Mammary epithelial cell (primary cell): ENCODE measurements at regions of chr1 and their contacts with region 1.

Region 1: DNA sequence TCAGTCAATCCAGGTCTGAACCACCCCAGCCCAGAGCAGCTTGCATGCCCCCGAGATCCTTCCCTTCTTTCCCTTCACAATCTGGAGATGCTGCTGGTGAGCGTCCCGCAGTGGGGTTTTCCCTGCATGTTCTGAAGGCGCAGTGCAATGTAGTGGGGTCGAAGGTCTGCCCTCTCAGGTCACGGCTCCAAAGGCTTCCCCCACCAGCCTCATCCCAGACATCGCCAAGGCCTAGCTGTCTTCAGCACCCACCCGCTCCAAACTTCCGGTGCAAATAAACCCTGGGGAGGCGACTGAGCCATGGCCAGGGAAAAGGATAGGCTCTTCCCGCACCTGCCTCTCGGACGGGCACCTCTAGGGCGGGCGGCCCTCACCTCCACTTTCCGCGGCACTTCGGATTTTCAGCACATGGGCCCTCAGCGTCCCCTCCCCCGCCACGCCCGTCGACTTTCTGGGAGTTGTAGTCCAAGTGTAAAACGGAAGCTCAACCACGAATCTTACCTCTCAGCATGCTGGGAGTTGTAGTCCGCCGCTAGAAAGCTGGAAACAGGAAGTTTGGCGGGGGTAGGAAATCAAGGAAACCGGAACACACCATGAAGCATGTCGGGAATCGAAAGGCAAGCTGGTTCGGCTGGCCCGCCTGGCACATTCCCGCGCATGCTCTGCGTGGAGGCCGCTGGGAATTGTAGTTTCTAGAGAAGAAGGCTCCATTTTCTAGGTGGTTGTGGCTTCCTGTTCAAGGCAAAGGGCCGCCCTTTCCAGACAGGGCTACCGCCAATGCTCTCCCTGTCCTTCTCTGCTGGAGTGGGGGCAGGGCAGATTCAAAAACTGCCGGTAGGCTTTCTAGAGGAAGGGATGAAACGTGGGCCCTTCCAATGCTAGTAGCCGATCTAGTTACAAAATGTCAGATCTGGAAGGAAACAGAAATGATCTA is at the start of gene MRPL24:
- DNase-seq: peak; percentile 100
- H3K4me3 ChIP-seq: peak within 1 kb of the TSS; percentile 50 to 85 (median 73)
- H3K27ac ChIP-seq: peak within 1 kb of the TSS; percentile 37
- H3K4me1 ChIP-seq: peaks cover 13% of the 10 kb centered on the region
- H3K27me3 ChIP-seq: no peaks in the 10 kb centered on the region
- CTCF ChIP-seq: no peak
- total RNA-seq, gene MRPL24: 25.0 to 86.1 TPM

Region 2: GRCh38 chr1:156500797-156501499 is 240.0 kb before region 1 on chr1:
- CTCF ChIA-PET with region 1: no interaction called
- dilution Hi-C with region 1: no loop called
- in situ Hi-C with region 1: no loop called
- intact Hi-C with region 1: loop called (anchors 10 kb)
- DNase-seq: peak; percentile 94
- H3K4me3 ChIP-seq: peak overlapping the region; percentile 75 to 95 (median 84)
- H3K27ac ChIP-seq: peak overlapping the region; percentile 93
- H3K4me1 ChIP-seq: peaks cover 58% of the 10 kb centered on the region
- H3K27me3 ChIP-seq: no peaks in the 10 kb centered on the region
- CTCF ChIP-seq: peak; percentile 28 to 66

Region 3: DNA sequence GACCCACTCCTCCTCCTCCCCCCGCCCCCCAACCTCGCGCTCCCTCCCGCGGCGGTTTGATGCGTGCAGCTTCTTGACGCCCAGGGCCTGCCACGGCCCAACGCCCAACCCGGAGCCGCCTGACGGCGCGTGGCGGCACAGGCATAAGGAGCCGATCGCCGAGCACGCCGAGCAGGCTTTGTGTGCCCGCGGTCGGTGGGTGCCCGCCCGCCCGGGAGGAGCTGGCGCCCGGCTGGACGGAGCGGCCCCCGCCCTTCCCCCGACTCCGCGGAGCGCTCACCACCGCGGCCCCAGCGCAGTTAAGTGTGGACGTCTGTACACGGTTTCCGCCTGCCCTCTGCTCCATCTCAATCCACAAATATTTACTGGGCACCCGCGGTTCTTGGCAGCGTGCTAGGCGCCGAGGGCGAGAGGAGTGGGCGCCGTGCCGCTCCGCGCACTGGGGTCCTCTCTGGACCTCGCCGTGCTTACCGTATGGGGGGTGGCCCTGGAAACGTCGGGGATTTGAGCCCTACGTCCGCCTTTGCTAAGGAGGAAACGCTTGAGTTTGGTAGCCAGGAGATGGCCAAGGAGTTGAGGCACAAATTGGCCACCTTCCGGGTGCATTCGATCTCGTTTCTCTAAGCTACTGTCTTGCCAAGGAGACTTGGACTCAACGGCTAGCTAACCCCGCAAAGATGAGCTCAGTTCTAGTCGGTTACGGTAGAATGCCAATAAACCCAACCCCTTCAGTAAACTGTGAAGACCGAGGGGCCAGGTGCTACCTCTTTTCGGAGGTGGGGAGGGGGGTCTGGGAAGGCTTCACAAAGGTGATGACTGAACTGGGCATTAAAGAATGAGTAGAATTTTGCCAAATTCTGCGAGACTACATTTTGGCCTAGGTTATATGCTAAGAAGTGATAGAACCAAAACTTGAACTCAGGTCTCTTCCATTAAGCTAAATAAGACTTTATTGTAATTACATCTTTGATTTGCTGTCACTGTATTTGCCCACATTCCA is 11.1 kb after region 1 on chr1:
- CTCF ChIA-PET with region 1: no interaction called
- dilution Hi-C with region 1: no loop called
- in situ Hi-C with region 1: no loop called
- intact Hi-C with region 1: loop called (anchors 1 kb)
- DNase-seq: peak; percentile 94
- H3K4me3 ChIP-seq: peak overlapping the region; percentile 68 to 76 (median 72)
- H3K27ac ChIP-seq: peak overlapping the region; percentile 74
- H3K4me1 ChIP-seq: peaks cover 33% of the 10 kb centered on the region
- H3K27me3 ChIP-seq: no peaks in the 10 kb centered on the region
- CTCF ChIP-seq: peak in 1 of 2 donors; percentile 1

Region 4: DNA sequence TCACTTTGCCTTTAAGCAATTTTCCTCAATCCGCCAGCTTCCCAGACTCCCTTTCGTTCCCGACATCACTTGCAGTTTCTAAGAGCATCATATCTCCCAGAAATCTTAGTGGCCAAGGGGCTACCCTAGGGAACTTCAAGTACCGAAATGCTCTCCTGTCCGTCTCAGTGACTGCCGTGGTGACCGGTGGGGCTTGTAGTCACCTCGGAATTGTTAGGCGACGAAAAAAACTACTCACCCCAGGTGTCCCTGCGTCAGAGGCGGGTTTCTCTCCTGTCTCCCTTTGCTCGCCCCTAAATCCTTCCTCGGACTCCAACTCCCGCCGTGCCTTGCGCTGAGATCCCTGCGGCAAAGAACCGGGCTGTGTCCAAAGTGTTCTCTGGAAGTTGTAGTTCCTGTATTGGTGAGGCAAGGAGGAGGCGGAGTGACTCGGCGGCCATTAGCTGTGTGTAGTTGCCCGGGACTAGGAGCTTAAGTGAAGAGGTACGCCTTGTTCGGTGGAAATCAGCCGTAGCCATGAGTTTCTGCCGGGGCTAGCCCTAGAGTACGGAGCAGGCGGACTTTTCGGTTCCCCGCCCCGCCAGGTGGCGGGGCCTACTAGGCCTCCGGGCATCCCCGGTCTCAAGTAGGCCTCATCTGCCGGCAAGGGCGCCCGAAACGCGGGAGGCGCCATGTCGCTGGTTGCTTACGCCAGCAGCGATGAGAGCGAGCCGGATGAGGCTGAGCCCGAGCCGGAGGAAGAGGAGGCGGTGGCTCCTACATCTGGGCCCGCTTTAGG is 26.3 kb after region 1 on chr1 and contains the start of gene PRCC:
- CTCF ChIA-PET with region 1: no interaction called
- dilution Hi-C with region 1: no loop called
- in situ Hi-C with region 1: no loop called
- intact Hi-C with region 1: loop called (anchors 1 kb)
- DNase-seq: peak; percentile 100
- H3K4me3 ChIP-seq: peak within 1 kb of the TSS; percentile 65 to 99 (median 91)
- H3K27ac ChIP-seq: peak within 1 kb of the TSS; percentile 86
- H3K4me1 ChIP-seq: peaks cover 20% of the 10 kb centered on the region
- H3K27me3 ChIP-seq: no peaks in the 10 kb centered on the region
- CTCF ChIP-seq: no peak
- total RNA-seq, gene PRCC: 22.2 to 69.7 TPM

Region 5: DNA sequence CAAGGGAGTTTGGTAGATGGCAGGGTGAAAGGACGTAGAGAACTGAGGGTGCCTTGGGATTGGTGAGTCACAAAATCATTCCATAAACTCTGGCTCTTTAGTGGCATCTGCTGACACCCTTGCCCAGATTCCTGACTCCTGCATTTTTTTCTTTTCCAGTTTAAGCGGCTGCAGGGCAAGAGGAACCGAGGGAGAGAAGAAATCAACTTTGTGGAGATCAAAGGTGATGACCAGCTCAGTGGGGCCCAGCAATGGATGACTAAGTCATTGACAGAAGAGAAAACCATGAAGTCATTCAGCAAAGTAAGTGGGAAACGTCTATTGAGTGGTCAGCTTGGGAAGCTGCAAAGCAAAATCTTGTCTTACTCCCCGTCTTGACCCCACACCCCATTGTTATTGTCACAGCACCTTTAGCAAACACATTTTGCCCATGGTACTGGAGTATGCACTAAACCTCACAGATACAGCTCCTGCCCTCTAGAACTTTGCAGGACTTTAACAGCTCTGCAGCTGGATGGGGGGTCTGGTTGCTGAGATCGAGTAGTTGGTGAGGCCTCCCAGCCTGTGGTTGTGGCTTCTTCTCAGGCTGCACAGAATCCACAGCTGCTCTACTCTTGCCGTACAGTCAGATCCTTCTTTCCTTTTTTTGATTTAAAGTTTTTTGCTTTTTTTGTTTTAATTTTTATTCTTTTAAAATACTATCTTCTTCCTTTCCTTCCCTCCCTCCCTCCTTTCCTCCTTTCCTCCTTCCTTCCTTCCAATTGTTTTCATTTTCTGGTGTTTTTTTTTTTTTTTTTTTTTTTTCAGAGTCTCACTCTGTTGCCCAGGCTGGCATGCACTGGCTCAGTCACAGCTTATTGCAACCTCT is 53.8 kb after region 1 on chr1:
- CTCF ChIA-PET with region 1: no interaction called
- dilution Hi-C with region 1: no loop called
- in situ Hi-C with region 1: no loop called
- intact Hi-C with region 1: no loop called
- DNase-seq: no peak
- H3K4me3 ChIP-seq: no peak overlapping the region
- H3K27ac ChIP-seq: no peak overlapping the region
- H3K4me1 ChIP-seq: no peaks in the 10 kb centered on the region
- H3K27me3 ChIP-seq: no peaks in the 10 kb centered on the region
- CTCF ChIP-seq: no peak